ENCODE measurements at regions of chr3 and their contacts with region 1.

Region 1: GRCh38 chr3:41450416-41451231 is 251.3 kb downstream of the CTNNB1 start:
- DNase-seq: no peak
- H3K4me3 ChIP-seq: no peak overlapping the region
- H3K27ac ChIP-seq: no peak overlapping the region
- H3K27me3 ChIP-seq: no peaks in the 10 kb centered on the region
- CTCF ChIP-seq: no peak

Region 2: GRCh38 chr3:41424543-41425300 is 25.9 kb before region 1 on chr3:
- CTCF ChIA-PET with region 1: interaction called, 15 read pairs
- POLR2A ChIA-PET with region 1: no interaction called
- DNase-seq: no peak
- H3K4me3 ChIP-seq: no peak overlapping the region
- H3K27ac ChIP-seq: no peak overlapping the region
- H3K27me3 ChIP-seq: no peaks in the 10 kb centered on the region
- CTCF ChIP-seq: no peak